ENCODE measurements at regions of chr2 and their contacts with region 1.

Region 1: DNA sequence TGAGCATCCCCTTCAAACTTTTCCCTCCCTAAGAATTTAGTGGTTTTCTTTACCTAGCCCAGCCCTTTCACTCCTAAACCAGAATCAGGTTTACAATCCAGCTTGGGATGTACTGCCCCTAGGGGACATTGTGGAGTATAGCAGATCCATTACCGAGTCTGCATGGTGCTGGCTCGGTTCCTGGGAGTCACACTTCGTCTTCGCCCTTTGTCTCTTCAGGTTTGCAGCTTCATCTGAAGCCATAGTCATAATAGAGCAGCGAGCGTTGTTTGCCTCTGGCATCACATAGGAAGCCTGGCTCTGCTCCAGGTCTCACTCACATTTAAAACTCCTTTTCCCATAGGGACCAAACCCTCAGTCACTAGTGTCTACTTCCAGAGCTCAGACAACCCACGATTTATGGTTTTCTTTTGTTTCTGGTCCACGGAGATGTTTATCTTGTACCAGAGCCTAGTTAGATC is 16.8 kb upstream of the LYPD6 start:
- DNase-seq: peak; percentile 36 to 73
- H3K4me3 ChIP-seq: no peak overlapping the region
- H3K27ac ChIP-seq: no peak overlapping the region
- H3K4me1 ChIP-seq: peaks cover 0 to 7% (median 6%) of the 10 kb centered on the region in 4 donors
- H3K27me3 ChIP-seq: peaks cover 0 to 11% (median 0%) of the 10 kb centered on the region in 3 donors
- CTCF ChIP-seq: peak in 5 of 7 experiments; percentile 60 to 75 (median 66)
- EP300 ChIP-seq: no peak
- POLR2A ChIP-seq: no peak

Region 2: GRCh38 chr2:149038442-149039212 is 274.9 kb before region 1 on chr2 and contains the start of gene LYPD6B:
- intact Hi-C with region 1: loop called (anchors 10 kb)
- DNase-seq: peak; percentile 87 to 89
- H3K4me3 ChIP-seq: peak within 1 kb of the TSS; percentile 50 to 54 (median 51)
- H3K27ac ChIP-seq: peak within 1 kb of the TSS; percentile 59 to 84 (median 78)
- H3K4me1 ChIP-seq: peaks cover 4 to 25% (median 14%) of the 10 kb centered on the region in 4 donors
- H3K27me3 ChIP-seq: peaks cover 0 to 39% (median 13%) of the 10 kb centered on the region in 3 donors
- CTCF ChIP-seq: no peak
- EP300 ChIP-seq: no peak
- POLR2A ChIP-seq: no peak
- total RNA-seq, gene LYPD6B: 14.7 to 88.7 (median 36.4) TPM in 4 of 5 donors, not detected in the other